A549 (cell line): ENCODE measurements at regions of chr17 and their contacts with region 1.

Region 1: DNA sequence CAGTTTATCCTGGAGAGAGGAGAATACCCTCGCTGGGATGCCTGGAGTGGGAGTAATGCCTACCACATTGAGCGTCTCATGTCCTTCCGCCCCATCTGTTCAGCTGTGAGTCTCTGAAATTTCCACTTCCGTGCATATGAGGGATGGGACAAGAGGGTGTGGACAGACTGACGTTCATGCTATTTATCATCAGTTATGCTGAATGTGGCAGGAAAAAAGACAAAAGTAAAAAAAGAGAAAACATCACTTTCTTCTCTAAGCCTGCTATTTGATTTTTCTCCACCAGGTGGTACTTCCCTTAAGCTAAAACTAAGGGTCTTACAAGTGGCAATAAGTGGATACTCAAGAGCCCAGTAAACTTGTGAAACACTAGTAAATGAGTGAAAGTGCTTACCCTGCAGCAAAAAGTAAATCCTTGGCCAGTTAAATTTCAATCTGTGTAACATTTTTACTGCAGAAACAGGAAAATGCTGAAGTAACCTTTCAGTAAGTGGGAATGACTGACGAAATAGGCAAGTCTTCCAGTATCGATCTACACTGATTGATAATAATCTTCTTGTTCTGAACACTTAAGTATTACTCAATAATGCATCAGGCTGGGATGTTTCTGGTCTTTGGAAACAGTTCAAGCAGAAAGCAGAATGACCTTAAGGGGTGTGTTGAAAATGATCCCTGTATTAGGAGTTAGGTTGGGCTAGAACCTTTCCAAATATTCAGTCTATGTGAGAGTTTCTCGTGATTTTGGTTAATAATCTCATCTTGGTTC is 5.6 kb downstream of the CRYBA1 start:
- DNase-seq: peak; percentile 59 to 63
- ATAC-seq: peak; percentile 58 to 60; a peak in 5 of 6 replicates
- H3K4me3 ChIP-seq: no peak overlapping the region
- H3K27ac ChIP-seq: no peak overlapping the region; a peak in 1 of 6 replicates
- H3K4me1 ChIP-seq: peaks cover 34% of the 10 kb centered on the region
- CTCF ChIP-seq: peak; percentile 49
- EP300 ChIP-seq: no peak
- POLR2A ChIP-seq: no peak
- RAD21 ChIP-seq: peak; percentile 15 to 46; a peak in 2 of 5 replicates

Region 2: GRCh38 chr17:29042679-29043538 is 209.4 kb before region 1 on chr17 and contains the start of gene PIPOX:
- CTCF ChIA-PET with region 1: no interaction called
- POLR2A ChIA-PET with region 1: no interaction called
- DNase-seq: peak in 1 of 2 experiments; percentile 17
- ATAC-seq: peak in 1 of 2 experiments; percentile 43; a peak in 3 of 6 replicates
- H3K4me3 ChIP-seq: no peak within 1 kb of the TSS
- H3K27ac ChIP-seq: no peak within 1 kb of the TSS
- H3K4me1 ChIP-seq: no peaks in the 10 kb centered on the region
- CTCF ChIP-seq: no peak
- EP300 ChIP-seq: no peak
- POLR2A ChIP-seq: no peak
- RAD21 ChIP-seq: no peak
- polyA plus RNA-seq, gene PIPOX: 0.94 and 1.4 TPM in 2 replicates

Region 3: DNA sequence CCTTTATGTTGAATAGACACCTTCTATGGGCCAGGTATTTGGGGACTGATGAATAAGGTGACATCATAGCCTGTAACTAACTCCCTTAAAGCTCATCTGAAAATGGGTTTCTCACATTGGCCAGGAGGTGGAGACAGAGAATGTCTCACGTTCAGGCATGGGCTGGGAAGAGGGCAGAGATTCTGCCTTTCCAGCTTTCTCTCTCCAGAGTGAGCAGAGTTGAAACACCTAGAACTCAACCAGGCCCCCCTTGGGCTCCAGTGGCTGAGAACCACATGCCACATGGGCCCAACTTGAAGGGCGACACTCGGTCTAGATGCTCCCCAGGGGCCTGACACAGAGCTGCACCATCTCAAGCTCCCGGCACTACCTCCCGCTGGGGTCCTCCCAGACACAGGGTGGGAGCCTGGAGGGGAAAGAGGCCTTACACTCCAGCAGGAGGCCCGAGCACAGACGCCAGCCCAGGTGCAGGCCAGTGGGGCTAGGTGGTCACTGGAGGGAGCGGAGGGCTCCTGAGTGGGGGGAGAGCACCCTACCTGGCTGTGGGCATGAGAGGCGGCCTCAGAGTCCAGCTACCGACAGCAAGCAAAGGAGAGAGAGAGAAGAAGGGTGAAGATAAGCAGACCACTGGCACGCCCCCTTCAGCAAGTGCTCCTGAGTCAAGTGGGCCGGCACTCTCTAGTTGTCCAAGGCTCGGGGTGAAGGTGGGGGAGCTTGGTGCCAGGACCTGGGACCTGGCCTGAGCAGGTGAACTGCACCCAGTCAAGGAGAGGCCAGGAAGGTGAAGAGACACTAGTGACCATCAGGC is 128.0 kb before region 1 on chr17:
- CTCF ChIA-PET with region 1: interaction called, 13 read pairs
- POLR2A ChIA-PET with region 1: no interaction called
- DNase-seq: peak; percentile 82 to 83
- ATAC-seq: peak; percentile 83 to 93
- H3K4me3 ChIP-seq: no peak overlapping the region
- H3K27ac ChIP-seq: peak overlapping the region in 1 of 2 experiments; percentile 39; a peak in 3 of 6 replicates
- H3K4me1 ChIP-seq: peaks cover 16% of the 10 kb centered on the region
- CTCF ChIP-seq: peak; percentile 88
- EP300 ChIP-seq: no peak
- POLR2A ChIP-seq: no peak
- RAD21 ChIP-seq: peak; percentile 88 to 96

Region 4: DNA sequence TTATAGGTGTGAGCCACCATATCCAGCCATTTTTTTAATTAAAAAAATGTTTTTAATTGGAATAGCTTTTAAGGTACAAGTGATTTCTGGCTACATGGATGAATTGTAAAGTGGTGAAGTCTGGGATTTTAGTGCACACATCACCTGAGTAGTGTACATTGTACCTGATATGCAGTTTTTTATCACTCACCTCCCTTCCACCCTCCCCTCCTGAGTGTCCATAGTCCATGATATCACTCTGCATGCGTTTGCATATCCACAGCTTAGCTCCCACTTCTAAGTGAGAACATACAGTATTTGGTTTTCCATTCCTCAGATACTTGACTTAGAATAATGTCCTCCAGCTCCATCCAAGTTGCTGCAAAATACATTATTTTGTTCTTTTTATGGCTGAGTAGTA is 19.0 kb before region 1 on chr17:
- CTCF ChIA-PET with region 1: interaction called, 76 read pairs
- POLR2A ChIA-PET with region 1: no interaction called
- DNase-seq: no peak
- ATAC-seq: no peak
- H3K4me3 ChIP-seq: no peak overlapping the region
- H3K27ac ChIP-seq: no peak overlapping the region
- H3K4me1 ChIP-seq: peaks cover 11% of the 10 kb centered on the region
- CTCF ChIP-seq: no peak
- EP300 ChIP-seq: no peak
- POLR2A ChIP-seq: no peak
- RAD21 ChIP-seq: no peak

Region 5: DNA sequence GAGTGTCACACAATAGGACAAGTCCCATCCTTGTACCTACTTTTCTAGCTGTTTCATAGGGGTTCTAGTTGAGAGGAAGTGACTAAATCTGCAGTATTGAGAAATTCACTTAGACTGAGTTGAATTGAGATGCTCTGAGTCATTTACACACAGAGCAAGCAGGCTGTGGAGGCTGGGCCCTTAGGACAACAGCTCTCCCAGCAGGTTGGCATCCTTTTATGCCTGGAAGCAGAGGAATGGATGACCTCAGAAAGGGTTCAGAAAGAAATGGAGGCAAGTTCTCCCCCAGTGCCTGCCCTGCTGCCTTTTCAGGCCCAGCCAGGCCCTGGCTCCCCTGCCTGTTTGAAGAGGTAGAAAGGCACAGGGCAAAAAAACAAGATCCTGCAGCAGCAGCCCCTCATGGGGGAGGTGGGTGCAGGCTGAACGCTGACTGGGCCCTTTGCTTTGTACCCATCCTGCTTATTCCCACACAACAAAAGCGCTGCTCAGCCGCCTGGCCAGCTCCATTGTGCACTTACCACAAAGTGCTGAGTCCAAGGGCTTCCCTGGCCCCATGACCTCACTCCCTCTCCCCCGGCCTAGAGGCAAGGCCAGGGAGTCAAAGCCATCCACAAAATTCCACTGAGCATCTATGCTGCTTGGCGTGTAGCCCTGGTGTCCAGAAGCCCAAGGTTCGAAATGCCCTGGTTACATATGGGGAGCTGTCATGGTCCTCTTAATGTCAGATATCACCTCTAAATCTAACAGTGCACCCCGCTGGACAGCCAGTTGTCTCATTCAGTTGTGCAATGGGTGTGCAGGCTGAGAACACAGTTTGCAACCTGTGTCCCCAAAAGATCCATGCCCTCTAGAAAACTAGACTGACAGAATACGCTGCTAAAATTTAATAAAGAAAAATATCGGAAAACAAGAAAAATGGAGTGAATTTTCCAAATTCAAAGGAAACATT is 11.0 kb before region 1 on chr17:
- CTCF ChIA-PET with region 1: interaction called, 99 read pairs
- POLR2A ChIA-PET with region 1: interaction called, 9 read pairs
- DNase-seq: peak; percentile 96 to 97
- ATAC-seq: peak; percentile 95 to 98
- H3K4me3 ChIP-seq: no peak overlapping the region
- H3K27ac ChIP-seq: peak overlapping the region; percentile 93
- H3K4me1 ChIP-seq: peaks cover 49% of the 10 kb centered on the region
- CTCF ChIP-seq: no peak
- EP300 ChIP-seq: peak in 1 of 2 experiments; percentile 71; a peak in 1 of 5 replicates
- POLR2A ChIP-seq: no peak
- RAD21 ChIP-seq: peak; percentile 27 to 45; a peak in 2 of 5 replicates

Region 6: GRCh38 chr17:29326023-29326813 is 73.9 kb after region 1 on chr17:
- CTCF ChIA-PET with region 1: no interaction called
- POLR2A ChIA-PET with region 1: no interaction called
- DNase-seq: no peak
- ATAC-seq: no peak
- H3K4me3 ChIP-seq: no peak overlapping the region
- H3K27ac ChIP-seq: no peak overlapping the region
- H3K4me1 ChIP-seq: no peaks in the 10 kb centered on the region
- CTCF ChIP-seq: no peak
- EP300 ChIP-seq: no peak
- POLR2A ChIP-seq: no peak
- RAD21 ChIP-seq: no peak

Region 7: DNA sequence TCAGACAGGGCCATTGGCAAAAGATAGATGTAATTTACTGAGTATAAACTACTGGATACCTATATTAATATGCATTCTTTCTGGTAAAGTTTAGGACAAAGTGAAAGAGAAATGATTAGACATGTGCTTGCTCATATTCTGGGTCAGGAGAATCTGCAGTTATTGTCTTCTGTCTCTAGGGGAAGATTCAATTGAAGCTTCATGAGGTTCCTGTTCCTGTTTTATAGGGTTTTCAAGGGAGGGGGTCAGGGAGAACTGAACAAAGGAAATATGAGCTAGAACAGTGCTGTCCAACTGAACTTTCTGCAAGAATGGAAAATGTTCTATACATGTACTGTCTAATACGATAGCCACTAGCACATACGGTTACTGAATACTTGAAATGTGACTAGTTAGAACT is 429.8 kb after region 1 on chr17:
- CTCF ChIA-PET with region 1: no interaction called
- POLR2A ChIA-PET with region 1: no interaction called
- DNase-seq: no peak
- ATAC-seq: peak in 1 of 2 experiments; percentile 35; a peak in 2 of 6 replicates
- H3K4me3 ChIP-seq: no peak overlapping the region
- H3K27ac ChIP-seq: no peak overlapping the region
- H3K4me1 ChIP-seq: no peaks in the 10 kb centered on the region
- CTCF ChIP-seq: no peak
- EP300 ChIP-seq: no peak
- POLR2A ChIP-seq: no peak
- RAD21 ChIP-seq: no peak